ENCODE measurements at regions of chr4 and their contacts with region 1.

Region 1: GRCh38 chr4:57163530-57164459 is 53.6 kb upstream of the IGFBP7 start:
- DNase-seq: peak; percentile 81
- ATAC-seq: peak; percentile 97
- H3K4me3 Mint-ChIP-seq: peak overlapping the region; percentile 78
- H3K27ac Mint-ChIP-seq: peak overlapping the region; percentile 43
- H3K4me1 Mint-ChIP-seq: peaks cover 8% of the 10 kb centered on the region
- H3K27me3 Mint-ChIP-seq: peaks cover 29% of the 10 kb centered on the region
- CTCF ChIP-seq: peak; percentile 88

Region 2: GRCh38 chr4:57037982-57038604 is 125.7 kb before region 1 on chr4:
- CTCF ChIA-PET with region 1: interaction called, 14 read pairs
- POLR2A ChIA-PET with region 1: no interaction called
- intact Hi-C with region 1: no loop called
- DNase-seq: peak; percentile 49
- ATAC-seq: no peak
- H3K4me3 Mint-ChIP-seq: no peak overlapping the region
- H3K27ac Mint-ChIP-seq: no peak overlapping the region
- H3K4me1 Mint-ChIP-seq: no peaks in the 10 kb centered on the region
- H3K27me3 Mint-ChIP-seq: peaks cover 11% of the 10 kb centered on the region
- CTCF ChIP-seq: peak; percentile 64

Region 3: DNA sequence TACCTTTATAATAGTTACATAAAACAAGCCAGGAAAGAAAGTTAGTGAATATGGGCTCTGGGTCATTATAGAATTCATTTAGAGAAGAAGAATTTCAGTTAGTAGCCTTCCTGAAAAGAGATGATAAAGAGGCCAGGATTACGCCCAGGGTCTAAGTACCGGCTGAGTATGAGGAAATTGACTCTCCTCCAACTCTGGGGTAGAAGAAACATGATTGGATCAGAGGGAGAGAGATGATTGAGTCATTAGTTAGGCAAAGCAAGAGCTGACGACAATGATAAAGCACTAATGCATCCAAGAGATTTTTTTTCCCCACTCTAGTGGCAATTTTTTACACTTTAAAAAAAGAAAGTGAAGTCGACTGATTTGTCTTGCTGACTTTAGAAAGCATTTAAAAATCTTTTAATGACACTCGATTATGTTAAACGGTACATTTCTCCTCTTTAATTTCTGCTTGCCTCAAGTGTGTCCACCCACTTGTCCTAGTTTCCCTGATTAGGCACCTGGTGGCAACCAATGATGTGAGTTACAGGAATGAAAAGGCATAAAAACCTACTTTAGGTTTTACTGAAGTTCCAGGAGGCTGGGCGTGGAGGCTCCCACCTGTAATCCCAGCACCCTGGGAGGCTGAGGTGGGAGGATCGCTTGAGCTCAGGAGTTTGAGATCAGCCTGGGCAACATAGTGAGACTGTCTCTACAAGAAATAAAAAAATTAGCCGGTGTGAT is 16.3 kb before region 1 on chr4:
- CTCF ChIA-PET with region 1: interaction called, 20 read pairs
- POLR2A ChIA-PET with region 1: no interaction called
- intact Hi-C with region 1: no loop called
- DNase-seq: no peak
- ATAC-seq: no peak
- H3K4me3 Mint-ChIP-seq: no peak overlapping the region
- H3K27ac Mint-ChIP-seq: no peak overlapping the region
- H3K4me1 Mint-ChIP-seq: no peaks in the 10 kb centered on the region
- H3K27me3 Mint-ChIP-seq: no peaks in the 10 kb centered on the region
- CTCF ChIP-seq: no peak

Region 4: DNA sequence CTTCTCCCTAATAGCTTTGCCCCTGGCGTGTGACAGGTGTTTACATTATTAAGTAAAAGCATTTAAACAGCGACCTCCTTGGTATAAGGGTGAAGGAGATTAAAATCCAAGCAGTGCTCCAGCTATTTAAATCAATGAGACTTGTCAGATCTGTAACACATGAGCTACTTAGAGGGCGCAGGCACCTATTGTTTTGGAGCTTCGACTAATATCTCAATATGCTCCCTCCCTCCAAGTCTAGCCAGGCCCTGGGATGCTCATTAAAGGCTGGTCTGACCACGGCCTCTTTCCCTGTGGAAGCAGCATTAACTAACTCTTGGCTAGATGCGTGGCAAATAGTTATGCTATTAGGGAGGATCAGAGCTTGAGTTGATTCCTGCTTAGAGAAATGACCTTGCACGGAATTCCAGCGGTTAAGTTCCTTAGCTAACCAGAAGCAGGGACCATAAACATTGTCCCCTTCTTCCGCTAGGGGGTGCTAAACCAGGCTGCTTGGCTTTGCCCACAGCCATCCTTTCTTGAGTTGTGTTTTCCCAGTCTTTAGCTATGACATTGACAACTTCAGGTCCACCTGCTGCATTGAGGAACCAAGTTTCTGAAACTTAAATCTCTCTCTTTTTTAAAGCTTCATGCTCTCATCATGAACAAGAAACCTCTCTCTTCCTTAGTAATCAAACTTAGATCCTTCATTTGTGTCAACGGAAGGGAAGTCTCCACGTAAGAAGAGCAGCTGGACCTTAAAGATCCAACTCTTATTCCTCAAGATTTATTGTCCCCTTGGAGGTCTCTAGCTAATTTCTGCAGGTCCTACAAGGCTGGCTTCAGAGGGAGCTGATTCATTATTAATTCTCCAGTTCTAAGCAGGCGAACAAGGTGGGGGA is 27.0 kb after region 1 on chr4:
- CTCF ChIA-PET with region 1: interaction called, 39 read pairs
- POLR2A ChIA-PET with region 1: no interaction called
- intact Hi-C with region 1: no loop called
- DNase-seq: peak; percentile 41
- ATAC-seq: no peak
- H3K4me3 Mint-ChIP-seq: no peak overlapping the region
- H3K27ac Mint-ChIP-seq: no peak overlapping the region
- H3K4me1 Mint-ChIP-seq: no peaks in the 10 kb centered on the region
- H3K27me3 Mint-ChIP-seq: peaks cover 19% of the 10 kb centered on the region
- CTCF ChIP-seq: peak; percentile 56

Region 5: DNA sequence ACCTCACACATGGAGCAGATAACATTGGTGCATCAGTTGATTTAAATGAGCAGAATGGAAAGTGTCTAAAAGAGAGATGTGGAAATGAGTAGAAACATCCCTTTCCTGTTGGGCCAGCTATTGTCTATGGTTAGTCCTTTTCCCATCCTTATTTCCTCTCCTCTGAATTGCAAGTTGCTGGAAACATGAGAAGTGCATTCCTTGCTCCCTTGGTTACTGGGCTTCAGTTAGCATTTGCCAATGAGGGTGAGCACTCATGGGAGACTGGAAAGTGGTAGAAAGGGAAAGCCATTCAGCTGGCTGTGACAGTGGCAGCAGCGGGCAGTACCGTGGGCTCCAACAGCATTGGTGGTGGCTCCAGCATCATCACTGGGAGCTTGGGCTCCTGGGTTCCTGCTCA is 42.4 kb after region 1 on chr4:
- CTCF ChIA-PET with region 1: interaction called, 18 read pairs
- POLR2A ChIA-PET with region 1: no interaction called
- intact Hi-C with region 1: no loop called
- DNase-seq: no peak
- ATAC-seq: no peak
- H3K4me3 Mint-ChIP-seq: no peak overlapping the region
- H3K27ac Mint-ChIP-seq: no peak overlapping the region
- H3K4me1 Mint-ChIP-seq: no peaks in the 10 kb centered on the region
- H3K27me3 Mint-ChIP-seq: peaks cover 3% of the 10 kb centered on the region
- CTCF ChIP-seq: no peak

Measured in activated CD8-positive, alpha-beta T cell treated with anti-CD3 and anti-CD28 coated beads for 36 hours (primary cell).